Colonic mucosa (tissue), 4 donors: ENCODE measurements at regions of chr11 and their contacts with region 1.

Region 1: DNA sequence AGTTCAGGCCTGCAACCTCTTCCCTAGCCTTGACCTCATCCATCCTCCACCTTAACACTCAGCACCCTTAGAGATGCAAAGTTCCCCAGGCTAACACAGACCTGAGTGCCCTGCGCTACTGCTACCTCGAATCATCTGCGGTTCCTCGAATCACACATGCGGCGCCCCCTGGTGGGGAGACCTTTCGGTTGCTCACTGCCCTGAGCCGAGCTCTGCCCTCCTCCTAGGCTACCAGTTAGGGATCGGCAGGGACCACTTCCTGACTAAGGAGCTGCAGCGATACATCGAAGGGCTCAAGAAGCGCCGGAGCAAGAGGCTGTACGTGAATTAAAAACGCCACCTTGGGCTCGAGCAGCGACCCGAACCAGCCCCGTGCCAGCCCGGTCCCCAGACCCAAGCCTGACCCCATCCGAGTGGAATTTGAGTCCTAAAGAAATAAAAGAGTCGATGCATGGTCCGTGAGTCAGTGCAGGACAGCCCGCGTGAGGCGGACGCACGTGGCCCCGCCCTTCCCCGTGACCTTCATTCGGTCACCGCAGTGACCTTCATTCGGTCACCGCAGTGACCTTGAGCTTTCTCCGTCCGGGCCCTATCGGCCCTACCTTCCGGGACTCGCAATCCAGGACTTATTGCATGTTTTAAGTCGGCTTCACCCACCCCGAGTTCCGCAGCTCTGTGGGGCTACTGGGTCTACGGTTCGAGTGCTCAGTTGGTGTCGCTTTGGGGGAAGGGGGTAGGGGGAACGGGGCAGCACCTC is 830 bp upstream of the ESRRA start:
- DNase-seq: peak; percentile 97
- H3K4me3 ChIP-seq: peak overlapping the region; percentile 45
- H3K27ac ChIP-seq: peak overlapping the region; percentile 99
- H3K4me1 ChIP-seq: peaks cover 28% of the 10 kb centered on the region
- H3K27me3 ChIP-seq: peaks cover 8% of the 10 kb centered on the region
- CTCF ChIP-seq: peak; percentile 84

Region 2: DNA sequence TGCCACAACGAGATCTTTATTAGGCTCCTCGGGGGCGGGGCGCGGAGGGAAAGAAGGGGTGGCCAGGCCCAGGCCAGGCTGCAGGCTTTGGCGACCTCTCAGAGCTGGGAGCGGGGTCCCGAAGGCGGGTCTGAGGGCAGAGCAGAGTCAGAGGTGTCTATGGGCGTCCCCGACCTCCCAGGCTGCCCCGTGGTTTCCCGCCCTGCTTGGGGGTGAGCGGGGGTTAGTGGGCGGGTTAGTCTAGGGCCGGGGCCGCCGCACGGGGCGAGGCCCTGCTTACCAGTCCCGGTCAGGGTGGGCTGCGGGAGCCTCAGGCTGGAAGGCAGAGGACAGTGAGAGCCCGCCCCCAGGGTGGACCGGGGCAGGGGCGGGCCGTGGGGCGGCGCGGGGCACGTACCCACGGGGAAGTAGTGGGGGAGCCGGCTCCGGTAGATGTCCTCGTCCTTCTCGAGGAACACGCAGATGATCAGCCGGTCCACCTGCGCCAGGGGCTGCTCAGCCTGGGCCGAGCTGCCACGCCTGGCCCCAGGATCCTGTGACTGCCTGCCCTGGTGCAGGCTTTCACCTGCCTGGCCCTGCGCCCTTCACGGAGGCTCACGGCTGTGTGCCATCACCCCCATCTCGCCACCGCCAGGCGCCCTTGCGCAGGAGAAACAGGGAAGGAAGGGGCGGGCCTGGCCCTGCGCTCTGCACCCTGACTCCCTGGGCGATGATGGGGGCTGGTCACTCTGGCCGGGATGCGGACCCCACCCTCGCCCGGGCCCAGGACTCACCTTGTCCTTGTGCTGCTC is 305.7 kb before region 1 on chr11:
- intact Hi-C with region 1: no loop called
- DNase-seq: no peak
- H3K4me3 ChIP-seq: peak overlapping the region; percentile 30
- H3K27ac ChIP-seq: no peak overlapping the region
- H3K4me1 ChIP-seq: peaks cover 9% of the 10 kb centered on the region
- H3K27me3 ChIP-seq: no peaks in the 10 kb centered on the region
- CTCF ChIP-seq: no peak

Region 3: GRCh38 chr11:64204464-64204989 is 100.0 kb before region 1 on chr11:
- intact Hi-C with region 1: loop called (anchors 5 kb)
- DNase-seq: peak; percentile 92
- H3K4me3 ChIP-seq: no peak overlapping the region
- H3K27ac ChIP-seq: peak overlapping the region; percentile 85
- H3K4me1 ChIP-seq: peaks cover 17% of the 10 kb centered on the region
- H3K27me3 ChIP-seq: no peaks in the 10 kb centered on the region
- CTCF ChIP-seq: peak; percentile 74

Region 4: DNA sequence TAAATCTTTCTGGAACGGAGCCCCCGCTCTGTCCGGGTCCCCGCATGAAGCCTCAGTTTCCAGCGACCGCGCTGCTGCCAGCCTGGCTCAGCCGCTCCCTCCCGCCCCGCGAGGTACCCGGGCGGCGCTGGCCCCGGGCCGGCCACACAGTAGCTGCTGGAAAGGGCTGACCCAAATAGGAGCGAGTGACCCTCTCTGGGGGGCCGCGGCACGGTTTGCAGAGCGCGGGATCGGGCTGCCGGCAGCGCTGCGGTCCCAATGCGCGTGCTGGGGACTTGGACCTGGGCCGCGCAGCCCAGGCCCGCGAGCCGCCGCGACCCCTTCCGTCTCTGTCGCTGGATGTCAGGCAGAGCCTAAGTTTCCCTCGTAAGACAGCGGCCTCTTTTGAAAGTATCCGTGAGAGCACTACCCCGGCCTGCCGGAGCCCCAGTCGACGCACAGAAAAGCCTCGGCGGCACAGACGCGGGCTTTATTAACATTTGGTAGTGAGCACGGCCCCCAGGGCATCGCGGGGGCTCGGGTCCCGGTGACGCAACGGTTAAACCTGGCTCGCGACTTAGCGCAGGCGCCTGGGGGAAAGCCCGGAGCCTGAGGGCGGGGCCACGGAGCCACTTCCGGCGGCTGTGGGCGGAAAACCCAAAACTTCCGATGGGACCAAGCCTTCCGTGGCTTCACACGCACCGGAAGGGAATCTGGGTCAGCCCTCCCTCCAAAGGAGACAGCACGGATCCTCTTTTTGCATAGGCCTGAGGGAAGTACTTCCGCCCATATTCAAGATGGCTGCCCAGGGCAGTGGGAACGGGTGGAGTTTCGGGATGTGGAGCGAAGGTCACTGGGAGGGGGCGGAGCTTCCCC is 34.9 kb before region 1 on chr11:
- intact Hi-C with region 1: loop called (anchors 2 kb)
- DNase-seq: peak; percentile 97
- H3K4me3 ChIP-seq: peak overlapping the region; percentile 67
- H3K27ac ChIP-seq: peak overlapping the region; percentile 98
- H3K4me1 ChIP-seq: peaks cover 27% of the 10 kb centered on the region
- H3K27me3 ChIP-seq: no peaks in the 10 kb centered on the region
- CTCF ChIP-seq: no peak

Region 5: GRCh38 chr11:64386306-64386702 is 81.8 kb after region 1 on chr11:
- intact Hi-C with region 1: no loop called
- DNase-seq: no peak
- H3K4me3 ChIP-seq: no peak overlapping the region
- H3K27ac ChIP-seq: no peak overlapping the region
- H3K4me1 ChIP-seq: no peaks in the 10 kb centered on the region
- H3K27me3 ChIP-seq: no peaks in the 10 kb centered on the region
- CTCF ChIP-seq: no peak